ENCODE measurements at regions of chr6 and their contacts with region 1.

Region 1: DNA sequence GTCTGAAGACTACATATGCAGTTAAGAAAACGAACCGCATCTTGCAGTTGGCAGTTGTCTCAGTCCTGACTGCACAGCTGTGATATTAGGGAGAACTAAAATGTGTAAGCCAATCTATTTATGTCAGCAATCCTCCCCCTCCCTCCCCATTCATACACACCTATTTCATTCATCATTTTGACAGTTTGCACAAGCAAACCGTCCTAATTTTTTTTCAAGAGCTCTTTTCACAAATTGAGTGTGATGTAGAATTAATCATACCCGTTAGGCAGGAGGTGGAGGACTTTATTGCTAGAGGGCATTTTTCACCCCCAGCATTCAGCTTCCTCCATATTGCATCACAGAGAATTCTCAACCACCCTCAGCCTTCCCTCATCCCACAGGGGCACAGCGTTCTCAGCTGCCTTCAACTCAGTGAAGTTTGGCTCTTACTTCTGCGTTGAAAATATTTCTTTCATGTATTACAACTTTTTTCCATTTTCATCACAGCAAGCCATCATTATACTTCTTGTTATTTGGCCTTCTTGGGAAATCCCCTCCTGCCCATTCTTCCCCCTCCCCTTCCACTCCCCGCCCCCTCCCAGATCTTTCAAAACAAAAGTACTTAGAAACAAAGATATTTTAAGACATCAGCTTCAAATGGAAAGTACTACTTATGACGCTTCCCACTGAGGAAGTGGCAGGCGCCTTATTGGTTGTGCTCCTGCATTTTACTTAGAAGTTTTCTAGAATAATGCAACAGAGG is 37.5 kb downstream of the NOX3 start:
- DNase-seq: peak; percentile 68
- ATAC-seq: peak; percentile 85
- H3K4me3 ChIP-seq: peak overlapping the region; percentile 37
- H3K27ac ChIP-seq: peak overlapping the region; percentile 79
- H3K4me1 ChIP-seq: peaks cover 29% of the 10 kb centered on the region
- H3K27me3 ChIP-seq: no peaks in the 10 kb centered on the region
- CTCF ChIP-seq: no peak
- EP300 ChIP-seq: no peak; a peak in 1 of 4 replicates
- POLR2A ChIP-seq: no peak
- RAD21 ChIP-seq: no peak

Region 2: DNA sequence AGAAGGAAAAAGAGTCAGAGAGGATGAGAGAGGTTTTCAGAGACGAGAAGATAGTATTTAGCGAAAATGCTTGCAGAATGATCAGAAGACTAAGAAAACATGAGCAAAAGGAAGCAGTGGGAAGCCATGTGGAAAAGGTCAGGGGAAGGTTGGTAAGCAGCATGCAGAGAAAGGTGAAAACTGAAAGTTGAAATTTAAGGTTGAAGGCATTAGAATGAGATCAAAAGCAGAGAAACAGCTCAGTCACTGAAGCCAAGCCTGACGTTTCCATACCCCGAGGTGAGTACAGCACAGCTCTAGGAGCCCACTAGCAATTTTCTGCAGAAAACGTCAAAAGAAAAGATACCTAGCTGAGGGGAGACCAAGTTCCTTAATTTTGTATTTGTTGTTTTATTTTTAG is 84.8 kb before region 1 on chr6:
- CTCF ChIA-PET with region 1: no interaction called
- POLR2A ChIA-PET with region 1: no interaction called
- RAD21 ChIA-PET with region 1: interaction called, 7 read pairs
- SMC1A ChIA-PET with region 1: interaction called, 10 read pairs
- in situ Hi-C with region 1: no loop called
- intact Hi-C with region 1: loop called (anchors 5 kb)
- DNase-seq: peak; percentile 58
- ATAC-seq: peak; percentile 86
- H3K4me3 ChIP-seq: no peak overlapping the region
- H3K27ac ChIP-seq: peak overlapping the region; percentile 23
- H3K4me1 ChIP-seq: peaks cover 12% of the 10 kb centered on the region; the same call in 1 of the 2 replicates
- H3K27me3 ChIP-seq: no peaks in the 10 kb centered on the region
- CTCF ChIP-seq: no peak
- EP300 ChIP-seq: no peak
- POLR2A ChIP-seq: no peak
- RAD21 ChIP-seq: no peak

Region 3: DNA sequence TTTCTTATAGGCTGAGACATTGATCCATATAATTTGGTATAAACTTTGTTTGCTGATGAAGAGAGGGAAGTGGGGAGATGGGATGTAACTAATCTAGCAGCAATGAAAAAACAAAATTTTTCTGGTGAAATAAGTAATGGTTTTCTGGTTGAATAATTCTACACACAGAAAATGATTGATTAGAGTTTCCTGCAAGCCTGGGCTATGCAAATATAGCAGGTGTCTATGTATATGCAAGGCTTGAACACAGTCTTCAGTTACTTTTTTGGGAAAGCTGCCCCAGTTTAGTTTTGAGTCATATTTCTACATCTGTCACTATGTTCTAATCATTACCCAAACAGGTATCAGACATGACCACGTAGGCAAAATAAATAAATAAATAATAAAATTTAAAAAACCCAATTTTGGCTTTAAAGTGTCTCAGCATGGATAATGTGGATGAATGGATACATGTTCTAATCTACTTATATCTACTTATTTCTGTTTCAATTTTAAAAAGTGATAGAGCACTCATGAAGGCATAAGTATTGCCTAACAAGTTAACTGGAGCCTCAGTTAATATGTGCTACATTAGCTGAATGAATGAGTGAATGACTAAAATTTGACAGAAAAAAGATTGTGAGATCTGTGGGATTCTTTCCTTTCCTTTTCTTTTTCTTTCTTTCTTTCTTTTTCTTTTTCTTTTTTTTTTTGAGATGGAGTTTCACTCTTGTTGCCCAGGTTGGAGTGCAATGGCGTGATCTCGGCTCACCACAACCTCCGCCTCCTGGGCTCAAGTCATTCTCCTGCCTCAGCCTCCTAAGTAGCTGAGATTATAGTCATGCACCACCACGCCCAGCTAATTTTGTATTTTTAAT is 66.7 kb before region 1 on chr6:
- CTCF ChIA-PET with region 1: interaction called, 3 read pairs
- POLR2A ChIA-PET with region 1: interaction called, 6 read pairs
- RAD21 ChIA-PET with region 1: interaction called, 10 read pairs
- SMC1A ChIA-PET with region 1: interaction called, 23 read pairs
- in situ Hi-C with region 1: no loop called
- intact Hi-C with region 1: loop called (anchors 1 kb)
- DNase-seq: peak; percentile 94
- ATAC-seq: peak; percentile 94
- H3K4me3 ChIP-seq: no peak overlapping the region
- H3K27ac ChIP-seq: peak overlapping the region; percentile 81
- H3K4me1 ChIP-seq: peaks cover 47% of the 10 kb centered on the region
- H3K27me3 ChIP-seq: no peaks in the 10 kb centered on the region
- CTCF ChIP-seq: no peak
- EP300 ChIP-seq: peak; percentile 94 to 98
- POLR2A ChIP-seq: no peak
- RAD21 ChIP-seq: peak; percentile 24; the same call in 1 of the 2 replicates

Region 4: DNA sequence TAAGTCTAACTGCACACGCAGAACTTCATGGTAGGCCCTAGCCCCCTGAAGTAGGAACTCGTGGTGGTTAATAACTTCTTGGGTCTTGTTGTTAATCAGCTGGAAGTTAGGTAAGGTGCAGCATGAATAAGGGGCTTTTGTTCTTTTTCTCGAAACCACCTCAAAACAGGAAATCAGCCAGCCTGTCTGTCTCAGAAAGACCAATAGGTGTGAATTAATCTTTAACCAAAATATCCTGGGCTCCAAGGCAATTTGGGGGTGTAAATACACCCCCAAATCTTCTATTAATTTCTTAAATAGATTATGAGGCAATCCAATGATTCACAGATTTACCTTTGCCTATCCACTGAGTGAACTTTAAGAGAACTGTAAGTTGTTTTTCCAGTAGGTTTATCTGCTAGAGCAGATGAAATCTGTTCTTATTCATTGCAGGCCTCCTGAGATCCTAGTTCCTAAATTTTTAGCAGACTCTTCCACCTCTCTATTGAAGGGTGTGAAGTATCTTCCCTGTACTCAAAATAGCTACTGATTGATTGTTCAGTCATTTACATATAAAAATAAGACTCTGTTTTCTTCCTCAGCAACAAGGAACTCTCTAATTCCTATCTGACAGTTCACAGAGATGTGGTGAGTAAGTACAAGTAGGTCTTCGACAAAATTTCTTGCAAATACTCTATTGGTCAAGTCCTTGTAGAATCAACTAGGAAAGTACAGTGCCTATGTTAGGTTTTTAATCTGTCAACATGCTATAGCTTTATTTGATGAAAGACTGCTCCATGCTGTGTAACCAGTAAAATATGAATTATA is 464.5 kb after region 1 on chr6:
- CTCF ChIA-PET with region 1: no interaction called
- POLR2A ChIA-PET with region 1: no interaction called
- RAD21 ChIA-PET with region 1: no interaction called
- SMC1A ChIA-PET with region 1: no interaction called
- in situ Hi-C with region 1: no loop called
- intact Hi-C with region 1: loop called (anchors 10 kb)
- DNase-seq: peak; percentile 21
- ATAC-seq: peak; percentile 86
- H3K4me3 ChIP-seq: no peak overlapping the region
- H3K27ac ChIP-seq: no peak overlapping the region
- H3K4me1 ChIP-seq: no peaks in the 10 kb centered on the region
- H3K27me3 ChIP-seq: no peaks in the 10 kb centered on the region
- CTCF ChIP-seq: no peak
- EP300 ChIP-seq: peak in 1 of 2 experiments; percentile 53; a peak in 2 of 4 replicates
- POLR2A ChIP-seq: no peak
- RAD21 ChIP-seq: no peak

Measured in GM12878 (cell line).